H1 (cell line): ENCODE measurements at regions of chr5 and their contacts with region 1.

Region 1: DNA sequence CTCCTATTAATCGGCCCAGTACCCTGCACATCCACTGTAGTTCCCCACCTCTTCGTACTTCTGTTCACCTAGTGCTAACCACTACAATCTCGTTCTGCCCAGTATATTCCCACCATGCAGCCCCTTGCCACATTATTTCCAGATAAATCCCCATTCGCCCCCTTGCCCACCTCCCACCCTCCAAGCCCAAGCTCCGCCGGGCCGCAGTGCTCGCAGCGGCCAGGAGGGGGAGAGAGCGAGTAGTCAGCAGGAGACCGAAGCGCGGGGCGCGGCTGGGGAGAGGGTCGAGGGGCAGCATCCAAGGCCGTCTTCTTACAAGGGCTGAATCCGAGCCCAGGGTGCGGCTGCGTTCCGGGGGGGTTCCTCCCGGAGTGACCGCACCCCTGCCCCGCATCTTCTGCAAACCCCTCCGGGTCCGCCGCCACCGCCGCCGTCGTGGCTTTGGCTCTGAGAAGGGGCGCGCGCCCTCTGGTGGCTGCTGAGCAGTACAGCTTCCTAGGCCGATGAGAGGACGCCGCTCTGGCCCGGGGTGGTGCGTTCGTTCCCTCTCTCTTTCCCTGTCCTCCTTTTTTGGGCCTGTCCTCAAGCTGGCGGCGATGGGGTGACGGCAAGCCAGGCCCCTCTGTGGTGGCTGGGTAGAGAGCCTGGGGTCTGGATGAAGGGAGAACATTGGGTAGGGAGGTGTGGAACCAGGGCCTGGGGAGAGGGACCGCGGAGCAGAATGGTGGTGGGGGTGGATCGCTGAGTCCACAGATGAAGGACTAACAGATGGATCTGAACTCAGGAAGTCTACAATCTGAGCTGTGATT is 30.0 kb upstream of the PSD2 start:
- DNase-seq: peak in 1 of 2 experiments; percentile 97
- H3K4me3 ChIP-seq: peak overlapping the region; percentile 15 to 73 (median 66); a peak in 7 of 8 replicates
- H3K27ac ChIP-seq: no peak overlapping the region
- H3K4me1 ChIP-seq: peaks cover 9 to 32% (median 15%) of the 10 kb centered on the region in 4 experiments
- H3K27me3 ChIP-seq: peaks cover 8 to 36% (median 26%) of the 10 kb centered on the region in 4 experiments
- CTCF ChIP-seq: peak in 2 of 3 experiments; percentile 65 to 75; a peak in 3 of 4 replicates
- EP300 ChIP-seq: no peak
- POLR2A ChIP-seq: no peak
- RAD21 ChIP-seq: peak; percentile 66 to 71

Region 2: GRCh38 chr5:139670369-139671095 is 95.1 kb before region 1 on chr5:
- CTCF ChIA-PET with region 1: interaction called, 21 read pairs
- POLR2A ChIA-PET with region 1: no interaction called
- DNase-seq: no peak
- H3K4me3 ChIP-seq: no peak overlapping the region
- H3K27ac ChIP-seq: no peak overlapping the region
- H3K4me1 ChIP-seq: peaks cover 9 to 55% (median 43%) of the 10 kb centered on the region in 4 experiments
- H3K27me3 ChIP-seq: no peaks in the 10 kb centered on the region
- CTCF ChIP-seq: peak in 1 of 3 experiments; percentile 50; a peak in 1 of 4 replicates
- EP300 ChIP-seq: no peak
- POLR2A ChIP-seq: no peak
- RAD21 ChIP-seq: no peak

Region 3: GRCh38 chr5:139690064-139690802 is 75.4 kb before region 1 on chr5:
- CTCF ChIA-PET with region 1: interaction called, 23 read pairs
- POLR2A ChIA-PET with region 1: interaction called, 4 read pairs
- DNase-seq: no peak
- H3K4me3 ChIP-seq: no peak overlapping the region
- H3K27ac ChIP-seq: no peak overlapping the region
- H3K4me1 ChIP-seq: peaks cover 27 to 51% (median 43%) of the 10 kb centered on the region in 4 experiments
- H3K27me3 ChIP-seq: peaks cover 0 to 5% (median 0%) of the 10 kb centered on the region in 4 experiments; a peak in 3 of 7 replicates
- CTCF ChIP-seq: no peak
- EP300 ChIP-seq: no peak
- POLR2A ChIP-seq: no peak
- RAD21 ChIP-seq: 0 out of 4 replicates have a peak, but pooled peaks of 1 of the 2 experiments have one; percentile 19

Region 4: DNA sequence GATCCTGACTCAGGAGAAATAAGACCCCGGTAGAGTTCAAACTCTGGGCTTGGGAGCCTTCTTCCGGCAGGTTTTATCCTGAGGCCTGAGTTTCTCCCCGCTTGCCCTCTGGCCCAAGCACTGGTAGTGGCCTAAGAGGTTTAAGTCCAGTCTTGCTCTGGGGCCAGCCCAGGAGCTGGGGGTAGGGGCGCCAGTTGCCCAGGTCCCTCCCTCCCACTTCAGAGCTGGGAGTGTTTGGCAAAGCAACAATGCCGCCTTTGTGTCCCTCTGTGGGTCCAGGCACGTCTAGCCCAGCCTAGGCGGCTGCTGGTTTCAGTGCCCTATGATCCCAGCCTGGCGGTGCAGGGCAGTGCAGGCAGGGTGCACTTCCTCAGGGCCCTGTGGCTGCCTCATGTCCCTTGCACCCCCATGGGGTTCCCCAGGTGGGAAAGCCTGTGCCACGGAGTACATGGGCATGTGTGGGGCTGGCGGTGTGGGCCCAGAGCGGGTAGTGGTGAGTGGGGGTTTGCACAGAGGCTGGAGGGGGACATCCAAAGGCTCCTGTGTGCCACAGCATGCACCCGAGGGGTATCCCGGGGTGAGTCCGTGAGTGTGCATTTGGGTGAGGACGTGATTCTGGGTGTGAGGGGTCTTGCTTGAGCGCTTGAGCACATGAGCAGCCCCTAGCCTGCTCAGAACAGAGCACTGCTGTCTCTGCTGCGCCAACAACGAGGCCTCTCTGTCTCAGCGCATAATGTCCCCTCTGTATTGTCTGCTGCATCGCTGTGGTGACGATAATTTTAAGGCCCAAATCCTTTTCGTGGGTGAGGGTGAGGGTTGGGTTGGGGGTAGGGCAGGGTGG is 31.7 kb before region 1 on chr5:
- CTCF ChIA-PET with region 1: interaction called, 25 read pairs
- POLR2A ChIA-PET with region 1: no interaction called
- DNase-seq: peak in 1 of 2 experiments; percentile 59
- H3K4me3 ChIP-seq: no peak overlapping the region
- H3K27ac ChIP-seq: no peak overlapping the region
- H3K4me1 ChIP-seq: peaks cover 0 to 19% (median 10%) of the 10 kb centered on the region in 4 experiments; a peak in 6 of 7 replicates
- H3K27me3 ChIP-seq: no peaks in the 10 kb centered on the region
- CTCF ChIP-seq: no peak
- EP300 ChIP-seq: no peak
- POLR2A ChIP-seq: no peak
- RAD21 ChIP-seq: no peak

Region 5: GRCh38 chr5:139787568-139788293 is 22.1 kb after region 1 on chr5:
- CTCF ChIA-PET with region 1: interaction called, 27 read pairs
- POLR2A ChIA-PET with region 1: interaction called, 4 read pairs
- DNase-seq: peak in 1 of 2 experiments; percentile 100
- H3K4me3 ChIP-seq: peak overlapping the region; percentile 39 to 82 (median 66)
- H3K27ac ChIP-seq: no peak overlapping the region
- H3K4me1 ChIP-seq: peaks cover 0 to 5% (median 5%) of the 10 kb centered on the region in 4 experiments; a peak in 5 of 7 replicates
- H3K27me3 ChIP-seq: peaks cover 0 to 22% (median 16%) of the 10 kb centered on the region in 4 experiments; a peak in 5 of 7 replicates
- CTCF ChIP-seq: peak in 2 of 3 experiments; percentile 95 to 98; a peak in 3 of 4 replicates
- EP300 ChIP-seq: no peak
- POLR2A ChIP-seq: no peak
- RAD21 ChIP-seq: peak; percentile 96 to 99